CD4-positive, alpha-beta memory T cell (primary cell): ENCODE measurements at regions of chr10 and their contacts with region 1.

Region 1: DNA sequence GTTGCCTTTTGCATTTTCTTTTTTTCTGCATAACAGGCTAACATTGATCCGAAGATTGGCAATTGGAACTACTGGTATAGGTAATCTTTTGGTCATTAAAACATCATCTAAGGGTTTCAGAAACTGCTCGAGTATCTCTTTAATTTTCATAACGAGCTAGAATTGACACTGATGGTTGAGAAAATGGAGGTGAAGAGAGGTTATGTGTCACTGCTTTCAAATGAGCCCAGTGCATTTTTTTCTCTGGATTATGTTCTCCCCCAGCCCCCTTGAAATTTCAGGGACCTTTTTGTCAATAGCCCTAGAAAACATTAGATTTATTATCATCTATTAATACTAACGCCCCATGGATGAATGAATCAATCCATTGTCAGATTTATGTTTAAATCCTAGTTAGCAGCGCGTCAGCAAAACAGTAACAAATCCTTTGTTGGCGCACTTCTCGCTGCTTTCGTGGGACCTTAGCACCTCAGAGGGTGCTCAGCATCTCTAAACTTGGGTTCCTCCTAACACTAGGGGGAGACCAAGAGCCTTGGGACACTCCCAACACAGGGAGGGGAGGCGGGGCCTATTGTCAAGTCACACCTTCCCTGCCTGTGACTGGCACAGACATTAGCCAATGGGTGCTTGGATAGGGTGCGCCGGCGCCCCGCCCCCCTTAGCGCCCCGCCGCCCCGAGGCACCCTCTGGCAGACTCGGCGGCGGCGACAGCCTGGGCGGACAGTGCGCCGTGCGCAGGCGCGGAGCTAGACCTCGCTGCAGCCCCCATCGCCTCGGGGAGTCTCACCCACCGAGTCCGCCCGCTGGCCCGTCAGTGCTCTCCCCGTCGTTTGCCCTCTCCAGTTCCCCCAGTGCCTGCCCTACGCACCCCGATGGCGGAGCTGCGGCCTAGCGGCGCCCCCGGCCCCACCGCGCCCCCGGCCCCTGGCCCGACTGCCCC is at the start of gene SUFU:
- DNase-seq: peak; percentile 98 to 99 (median 98)
- H3K4me3 ChIP-seq: peak within 1 kb of the TSS; percentile 97 to 99
- H3K4me3 Mint-ChIP-seq: peak within 1 kb of the TSS in 2 of 8 donors; percentile 92 to 95
- H3K27ac ChIP-seq: peak within 1 kb of the TSS; percentile 91
- H3K27ac Mint-ChIP-seq: peak within 1 kb of the TSS in 6 of 7 donors; percentile 86 to 95 (median 94)
- H3K4me1 ChIP-seq: peaks cover 54% of the 10 kb centered on the region
- H3K4me1 Mint-ChIP-seq: peaks cover 21 to 49% (median 35%) of the 10 kb centered on the region in 4 donors
- H3K27me3 ChIP-seq: no peaks in the 10 kb centered on the region
- H3K27me3 Mint-ChIP-seq: no peaks in the 10 kb centered on the region
- total RNA-seq, gene SUFU: 20.5 to 22.0 TPM

Region 2: GRCh38 chr10:102151774-102152544 is 351.6 kb before region 1 on chr10 and contains the start of gene NOLC1:
- CTCF ChIA-PET with region 1: no interaction called
- POLR2A ChIA-PET with region 1: interaction called, 4 read pairs
- intact Hi-C with region 1: loop called (anchors 1 kb)
- DNase-seq: peak; percentile 99 to 100 (median 100)
- H3K4me3 ChIP-seq: peak within 1 kb of the TSS; percentile 82 to 91
- H3K4me3 Mint-ChIP-seq: peak within 1 kb of the TSS; percentile 91 to 97 (median 94)
- H3K27ac ChIP-seq: peak within 1 kb of the TSS; percentile 87
- H3K27ac Mint-ChIP-seq: peak within 1 kb of the TSS; percentile 91 to 99 (median 97)
- H3K4me1 ChIP-seq: peaks cover 34% of the 10 kb centered on the region
- H3K4me1 Mint-ChIP-seq: peaks cover 21 to 60% (median 42%) of the 10 kb centered on the region in 4 donors
- H3K27me3 ChIP-seq: no peaks in the 10 kb centered on the region
- H3K27me3 Mint-ChIP-seq: no peaks in the 10 kb centered on the region
- total RNA-seq, gene NOLC1: 63.7 to 71.6 TPM

Region 3: GRCh38 chr10:102375250-102375649 is 128.3 kb before region 1 on chr10:
- CTCF ChIA-PET with region 1: no interaction called
- POLR2A ChIA-PET with region 1: no interaction called
- intact Hi-C with region 1: no loop called
- DNase-seq: no peak
- H3K4me3 ChIP-seq: no peak overlapping the region
- H3K4me3 Mint-ChIP-seq: no peak overlapping the region
- H3K27ac ChIP-seq: no peak overlapping the region
- H3K27ac Mint-ChIP-seq: no peak overlapping the region
- H3K4me1 ChIP-seq: no peaks in the 10 kb centered on the region
- H3K4me1 Mint-ChIP-seq: no peaks in the 10 kb centered on the region
- H3K27me3 ChIP-seq: no peaks in the 10 kb centered on the region
- H3K27me3 Mint-ChIP-seq: no peaks in the 10 kb centered on the region

Region 4: GRCh38 chr10:102420810-102421644 is 82.5 kb before region 1 on chr10 and contains the start of gene FBXL15:
- CTCF ChIA-PET with region 1: interaction called, 11 read pairs
- POLR2A ChIA-PET with region 1: interaction called, 38 read pairs
- intact Hi-C with region 1: loop called (anchors 1 kb)
- DNase-seq: peak; percentile 92 to 94 (median 93)
- H3K4me3 ChIP-seq: peak within 1 kb of the TSS; percentile 61 to 90
- H3K4me3 Mint-ChIP-seq: peak within 1 kb of the TSS; percentile 90 to 99 (median 96)
- H3K27ac ChIP-seq: peak within 1 kb of the TSS; percentile 64
- H3K27ac Mint-ChIP-seq: peak within 1 kb of the TSS; percentile 92 to 98 (median 96)
- H3K4me1 ChIP-seq: peaks cover 37% of the 10 kb centered on the region
- H3K4me1 Mint-ChIP-seq: peaks cover 17 to 53% (median 33%) of the 10 kb centered on the region in 4 donors
- H3K27me3 ChIP-seq: peaks cover 9% of the 10 kb centered on the region
- H3K27me3 Mint-ChIP-seq: peaks cover 10 to 16% of the 10 kb centered on the region in 2 donors
- total RNA-seq, gene FBXL15: 21.1 to 24.1 TPM

Region 5: GRCh38 chr10:102476466-102477141 is 26.9 kb before region 1 on chr10:
- CTCF ChIA-PET with region 1: interaction called, 11 read pairs
- POLR2A ChIA-PET with region 1: interaction called, 4 read pairs
- intact Hi-C with region 1: no loop called
- DNase-seq: no peak
- H3K4me3 ChIP-seq: no peak overlapping the region
- H3K4me3 Mint-ChIP-seq: no peak overlapping the region
- H3K27ac ChIP-seq: no peak overlapping the region
- H3K27ac Mint-ChIP-seq: peak overlapping the region in 6 of 7 donors; percentile 18 to 86 (median 59)
- H3K4me1 ChIP-seq: peaks cover 20% of the 10 kb centered on the region
- H3K4me1 Mint-ChIP-seq: peaks cover 11 to 28% (median 17%) of the 10 kb centered on the region in 4 donors
- H3K27me3 ChIP-seq: no peaks in the 10 kb centered on the region
- H3K27me3 Mint-ChIP-seq: no peaks in the 10 kb centered on the region

Region 6: DNA sequence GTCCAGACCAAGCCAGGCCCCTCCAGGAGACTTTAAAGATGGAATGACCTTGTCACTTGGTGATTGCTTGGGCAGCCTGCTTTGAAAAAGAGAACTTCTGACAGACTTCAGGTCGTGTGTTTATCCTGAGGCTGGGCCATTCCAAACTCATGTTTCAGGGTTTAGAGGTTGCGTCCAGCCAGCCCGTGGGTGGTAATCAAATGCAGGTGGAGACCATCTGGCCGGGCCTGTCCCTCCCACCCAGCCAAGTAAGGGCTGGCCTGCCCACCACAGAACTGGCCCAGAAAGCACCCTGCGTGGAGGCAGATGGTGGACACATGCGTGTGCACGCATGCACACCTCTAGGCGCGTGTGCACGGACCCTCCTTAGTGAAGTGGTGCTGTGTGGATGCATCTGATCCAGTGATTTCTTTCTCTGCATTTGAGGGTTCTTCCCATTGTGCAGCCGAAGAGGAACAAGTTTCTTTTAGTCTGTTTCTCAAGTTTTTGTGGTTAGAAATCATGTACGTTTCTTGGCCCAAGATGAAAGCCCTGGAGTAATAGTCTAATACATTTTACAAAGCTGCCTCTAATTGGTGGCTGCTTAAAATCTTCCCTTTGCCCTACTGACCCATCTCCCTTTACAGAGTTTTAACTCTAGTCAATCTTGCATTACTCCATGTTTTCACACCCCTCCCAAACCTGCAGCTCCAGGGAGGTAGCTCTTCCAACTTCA is 43.2 kb after region 1 on chr10:
- CTCF ChIA-PET with region 1: no interaction called
- POLR2A ChIA-PET with region 1: no interaction called
- intact Hi-C with region 1: no loop called
- DNase-seq: no peak
- H3K4me3 ChIP-seq: no peak overlapping the region
- H3K4me3 Mint-ChIP-seq: no peak overlapping the region
- H3K27ac ChIP-seq: no peak overlapping the region
- H3K27ac Mint-ChIP-seq: peak overlapping the region in 1 of 7 donors; percentile 46
- H3K4me1 ChIP-seq: no peaks in the 10 kb centered on the region
- H3K4me1 Mint-ChIP-seq: peaks cover 0 to 17% (median 11%) of the 10 kb centered on the region in 4 donors
- H3K27me3 ChIP-seq: no peaks in the 10 kb centered on the region
- H3K27me3 Mint-ChIP-seq: no peaks in the 10 kb centered on the region

Region 7: DNA sequence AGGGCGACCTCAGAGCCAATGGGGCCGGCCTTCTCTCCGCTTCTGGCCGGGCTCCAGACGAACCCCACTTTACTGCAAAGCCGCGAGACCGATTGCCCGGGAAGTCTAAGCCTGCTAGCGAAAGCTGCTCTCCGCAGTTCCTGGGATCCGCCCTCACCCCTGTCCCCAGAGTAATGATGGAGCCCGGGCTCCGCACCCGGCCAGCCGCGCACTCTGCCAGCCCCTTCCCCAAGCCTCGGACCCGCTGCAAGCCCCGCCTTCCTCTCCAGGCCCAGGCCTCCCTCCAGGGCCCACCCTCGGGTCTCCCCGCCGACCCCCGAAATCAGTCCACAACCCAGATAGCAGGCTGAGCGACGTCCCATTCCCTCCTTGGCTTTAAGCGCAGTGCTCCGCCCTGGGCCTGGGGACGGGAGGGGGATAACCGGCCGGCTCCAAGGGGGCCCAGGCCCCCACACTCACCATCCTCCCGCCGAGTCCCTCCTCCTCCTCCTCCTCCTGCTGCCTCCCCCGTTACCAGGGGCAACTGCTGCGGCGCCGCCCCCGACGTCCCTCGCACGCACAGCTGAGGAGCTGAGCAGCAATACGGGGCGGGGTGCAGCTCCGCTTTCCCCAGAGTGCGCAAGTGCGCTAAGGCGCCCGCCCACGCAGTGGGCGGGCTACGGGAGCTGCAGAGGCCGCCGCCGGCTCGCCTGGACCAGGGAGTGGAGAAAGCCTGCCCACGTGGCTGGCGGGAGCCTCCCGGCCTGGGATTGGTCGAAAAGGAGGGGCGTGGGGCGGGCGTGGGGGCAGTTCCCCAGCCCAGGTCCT is 210.5 kb after region 1 on chr10 and contains the start of gene ARL3:
- CTCF ChIA-PET with region 1: interaction called, 7 read pairs
- POLR2A ChIA-PET with region 1: interaction called, 8 read pairs
- intact Hi-C with region 1: loop called (anchors 1 kb)
- DNase-seq: peak; percentile 89 to 97 (median 92)
- H3K4me3 ChIP-seq: peak within 1 kb of the TSS; percentile 81 to 89
- H3K4me3 Mint-ChIP-seq: peak within 1 kb of the TSS; percentile 90 to 98 (median 96)
- H3K27ac ChIP-seq: peak within 1 kb of the TSS; percentile 94
- H3K27ac Mint-ChIP-seq: peak within 1 kb of the TSS; percentile 90 to 98 (median 96)
- H3K4me1 ChIP-seq: peaks cover 33% of the 10 kb centered on the region
- H3K4me1 Mint-ChIP-seq: peaks cover 34 to 67% (median 41%) of the 10 kb centered on the region in 4 donors
- H3K27me3 ChIP-seq: no peaks in the 10 kb centered on the region
- H3K27me3 Mint-ChIP-seq: no peaks in the 10 kb centered on the region
- total RNA-seq, gene ARL3: 3.7 to 4.0 TPM

Region 8: GRCh38 chr10:103367782-103368518 is 864.4 kb after region 1 on chr10 and contains the start of gene TAF5:
- CTCF ChIA-PET with region 1: no interaction called
- POLR2A ChIA-PET with region 1: no interaction called
- intact Hi-C with region 1: loop called (anchors 5 kb)
- DNase-seq: peak; percentile 91 to 93 (median 91)
- H3K4me3 ChIP-seq: peak within 1 kb of the TSS; percentile 52 to 89
- H3K4me3 Mint-ChIP-seq: peak within 1 kb of the TSS; percentile 92 to 98 (median 96)
- H3K27ac ChIP-seq: peak within 1 kb of the TSS; percentile 79
- H3K27ac Mint-ChIP-seq: peak within 1 kb of the TSS; percentile 74 to 98 (median 95)
- H3K4me1 ChIP-seq: peaks cover 22% of the 10 kb centered on the region
- H3K4me1 Mint-ChIP-seq: peaks cover 11 to 25% (median 16%) of the 10 kb centered on the region in 4 donors
- H3K27me3 ChIP-seq: no peaks in the 10 kb centered on the region
- H3K27me3 Mint-ChIP-seq: no peaks in the 10 kb centered on the region
- total RNA-seq, gene TAF5: 7.5 to 7.9 TPM